WTC11 (cell line): ENCODE measurements at regions of chr6 and their contacts with region 1.

Region 1: DNA sequence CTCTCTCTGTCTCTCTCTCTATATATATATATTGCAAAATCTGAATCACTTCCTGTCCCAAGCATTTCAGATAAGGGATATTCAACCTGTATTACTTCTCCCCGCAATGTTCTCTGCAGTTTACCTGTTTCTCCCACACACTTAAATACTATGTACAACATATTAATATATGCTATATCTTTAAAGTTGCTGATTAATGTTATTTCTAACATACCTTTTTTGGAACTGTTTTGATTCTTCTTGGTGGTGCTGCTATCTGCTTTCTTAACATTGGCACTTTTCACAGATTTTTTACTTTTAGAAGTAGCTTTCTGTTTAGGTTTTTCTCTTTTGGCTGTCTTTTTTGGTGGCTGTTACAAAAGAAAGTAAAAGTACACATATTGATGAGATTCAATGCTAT is 27.2 kb downstream of the DEK start:
- DNase-seq: no peak
- ATAC-seq: no peak
- H3K4me3 Mint-ChIP-seq: no peak overlapping the region
- H3K27ac Mint-ChIP-seq: no peak overlapping the region
- H3K4me1 Mint-ChIP-seq: peaks cover 20% of the 10 kb centered on the region
- H3K27me3 Mint-ChIP-seq: no peaks in the 10 kb centered on the region; the same call in 1 of the 2 replicates
- CTCF ChIP-seq: no peak

Region 2: GRCh38 chr6:18253635-18254034 is 16.5 kb after region 1 on chr6:
- CTCF ChIA-PET with region 1: no interaction called
- POLR2A ChIA-PET with region 1: interaction called, 10 read pairs
- DNase-seq: no peak
- ATAC-seq: no peak
- H3K4me3 Mint-ChIP-seq: no peak overlapping the region
- H3K27ac Mint-ChIP-seq: no peak overlapping the region
- H3K4me1 Mint-ChIP-seq: peaks cover 17% of the 10 kb centered on the region
- H3K27me3 Mint-ChIP-seq: no peaks in the 10 kb centered on the region
- CTCF ChIP-seq: no peak